HepG2 (cell line): ENCODE measurements at regions of chr5 and their contacts with region 1.

Region 1: DNA sequence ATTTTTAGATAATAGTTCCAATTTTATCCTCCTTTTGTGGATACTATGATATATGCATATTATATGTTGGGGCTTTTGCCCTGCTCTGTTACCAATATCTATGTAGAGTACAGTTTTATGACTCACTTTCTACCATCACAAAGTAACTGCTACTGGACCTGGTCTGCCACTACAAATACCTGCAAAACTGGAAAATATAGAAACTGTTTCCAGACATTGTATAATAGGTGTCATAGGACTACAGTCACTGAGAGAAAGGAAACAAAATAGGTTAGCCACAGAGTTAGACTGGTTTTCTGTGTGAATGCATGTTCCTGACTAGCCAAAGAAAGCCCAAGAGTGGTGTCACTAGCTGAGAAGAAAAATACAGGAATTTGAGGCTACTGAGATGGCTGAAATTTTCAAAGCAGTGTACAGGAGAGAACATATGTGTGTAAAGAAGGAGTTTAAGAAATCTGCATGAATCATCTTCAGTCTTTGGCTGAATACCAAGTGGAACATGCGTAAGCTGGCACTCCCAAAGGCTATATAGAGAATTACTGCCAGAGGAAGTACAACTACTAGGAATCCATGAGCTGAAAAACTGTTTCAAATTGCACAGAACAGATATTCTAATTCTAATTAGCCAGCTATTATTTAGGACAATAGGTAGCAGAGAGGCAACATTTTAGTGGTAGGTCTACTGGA is 29.0 kb upstream of the FAM174A start:
- DNase-seq: no peak
- ATAC-seq: no peak
- H3K4me3 ChIP-seq: no peak overlapping the region
- H3K27ac ChIP-seq: no peak overlapping the region
- H3K4me1 ChIP-seq: no peaks in the 10 kb centered on the region
- H3K27me3 ChIP-seq: no peaks in the 10 kb centered on the region
- CTCF ChIP-seq: no peak
- EP300 ChIP-seq: no peak
- POLR2A ChIP-seq: no peak
- RAD21 ChIP-seq: no peak

Region 2: GRCh38 chr5:99104538-99105132 is 1401.5 kb before region 1 on chr5:
- CTCF ChIA-PET with region 1: no interaction called
- POLR2A ChIA-PET with region 1: no interaction called
- in situ Hi-C with region 1: loop called (anchors 25 kb)
- intact Hi-C with region 1: no loop called
- DNase-seq: peak; percentile 13
- ATAC-seq: no peak
- H3K4me3 ChIP-seq: no peak overlapping the region
- H3K27ac ChIP-seq: no peak overlapping the region
- H3K4me1 ChIP-seq: no peaks in the 10 kb centered on the region
- H3K27me3 ChIP-seq: no peaks in the 10 kb centered on the region
- CTCF ChIP-seq: peak; percentile 53
- EP300 ChIP-seq: no peak
- POLR2A ChIP-seq: no peak
- RAD21 ChIP-seq: no peak

Region 3: GRCh38 chr5:100746730-100747129 is 240.6 kb after region 1 on chr5:
- CTCF ChIA-PET with region 1: no interaction called
- POLR2A ChIA-PET with region 1: no interaction called
- in situ Hi-C with region 1: no loop called
- intact Hi-C with region 1: no loop called
- DNase-seq: no peak
- ATAC-seq: no peak
- H3K4me3 ChIP-seq: no peak overlapping the region
- H3K27ac ChIP-seq: no peak overlapping the region
- H3K4me1 ChIP-seq: no peaks in the 10 kb centered on the region
- H3K27me3 ChIP-seq: no peaks in the 10 kb centered on the region
- CTCF ChIP-seq: no peak
- EP300 ChIP-seq: no peak
- POLR2A ChIP-seq: no peak
- RAD21 ChIP-seq: no peak